ENCODE measurements at regions of chr10 and their contacts with region 1.

Region 1: GRCh38 chr10:95601116-95601719 is 40.0 kb upstream of the SORBS1 start:
- ATAC-seq: peak; percentile 77 to 99 (median 92)
- H3K4me3 ChIP-seq: no peak overlapping the region
- H3K27ac ChIP-seq: no peak overlapping the region
- H3K4me1 ChIP-seq: no peaks in the 10 kb centered on the region

Region 2: DNA sequence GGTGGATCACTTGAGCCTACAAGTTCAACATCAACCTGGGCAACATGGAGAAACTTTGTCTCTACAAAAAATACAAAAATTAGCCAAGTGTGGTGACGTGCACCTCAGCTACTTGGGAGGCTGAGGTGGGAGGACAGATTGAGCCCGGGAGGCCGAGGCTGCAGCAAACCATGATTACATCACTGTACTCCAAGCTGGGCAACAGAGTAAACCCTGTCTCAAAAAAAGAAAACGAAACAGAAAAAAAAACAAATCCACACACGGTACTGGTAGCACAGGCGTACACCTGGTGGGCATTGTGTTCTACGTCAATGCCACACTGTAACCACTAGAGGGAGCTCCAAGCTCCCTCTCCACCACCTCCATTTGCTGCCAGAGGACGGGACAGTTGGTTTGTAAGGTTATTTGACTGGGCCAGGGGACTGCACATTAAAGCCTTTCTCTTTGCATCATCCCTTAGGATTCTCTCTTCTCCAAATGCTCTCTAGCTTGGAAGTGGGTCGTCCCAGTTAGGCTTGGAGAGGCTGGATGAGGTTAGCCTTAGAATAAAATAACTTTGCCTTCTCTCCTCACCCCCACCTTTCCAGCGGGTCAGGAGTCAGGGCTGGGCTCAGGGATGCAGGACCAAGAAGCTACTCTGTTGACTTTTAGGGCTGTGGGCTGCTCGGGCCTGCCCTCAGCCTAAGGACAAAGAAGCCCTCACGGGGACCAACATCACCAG is 170.8 kb before region 1 on chr10:
- in situ Hi-C with region 1: loop called (anchors 5 to 25 kb)
- ATAC-seq: peak; percentile 83 to 97 (median 91)
- H3K4me3 ChIP-seq: no peak overlapping the region
- H3K27ac ChIP-seq: no peak overlapping the region
- H3K4me1 ChIP-seq: peaks cover 0 to 3% of the 10 kb centered on the region in 2 donors

Region 3: GRCh38 chr10:95437669-95438068 is 163.5 kb before region 1 on chr10:
- in situ Hi-C with region 1: loop called (anchors 5 to 25 kb)
- ATAC-seq: no peak
- H3K4me3 ChIP-seq: no peak overlapping the region
- H3K27ac ChIP-seq: no peak overlapping the region
- H3K4me1 ChIP-seq: peaks cover 0 to 3% of the 10 kb centered on the region in 2 donors

Measured in motor neuron (in vitro differentiated cells).